HEK293 (cell line): ENCODE measurements at regions of chr9 and their contacts with region 1.

Region 1: DNA sequence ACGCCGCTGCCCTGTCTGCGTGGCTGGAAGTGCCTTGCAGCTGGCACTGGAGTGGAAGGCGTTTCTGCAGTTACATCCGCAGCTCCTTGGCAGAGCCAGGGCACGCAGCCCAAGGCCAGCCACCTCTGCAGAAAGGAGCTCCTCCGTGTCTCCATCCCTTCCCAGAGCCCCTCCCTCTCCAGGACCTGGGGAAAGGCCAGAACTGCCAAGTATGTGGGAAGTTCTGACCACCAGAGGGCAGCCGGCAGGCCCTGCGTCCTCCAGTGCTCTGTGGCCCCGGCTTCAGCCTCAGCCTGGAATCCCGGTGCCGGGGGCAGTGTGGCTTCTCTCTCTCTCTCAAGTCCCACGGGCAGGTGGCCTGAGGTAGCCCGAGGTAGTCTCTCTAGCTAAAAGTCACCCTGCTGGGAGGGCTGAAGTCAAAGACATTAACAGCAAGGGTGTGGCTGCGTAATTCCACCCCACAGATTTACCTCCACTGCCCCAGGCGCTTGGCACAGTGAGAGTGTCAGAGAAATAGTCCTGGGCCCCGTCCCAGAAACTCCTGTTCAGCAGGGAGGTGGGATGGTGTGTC is 101.7 kb upstream of the FCN2 start:
- H3K4me3 ChIP-seq: no peak overlapping the region
- H3K27ac ChIP-seq: no peak overlapping the region
- H3K4me1 ChIP-seq: peaks cover 3% of the 10 kb centered on the region; the same call in 1 of the 2 replicates
- CTCF ChIP-seq: peak; percentile 75

Region 2: DNA sequence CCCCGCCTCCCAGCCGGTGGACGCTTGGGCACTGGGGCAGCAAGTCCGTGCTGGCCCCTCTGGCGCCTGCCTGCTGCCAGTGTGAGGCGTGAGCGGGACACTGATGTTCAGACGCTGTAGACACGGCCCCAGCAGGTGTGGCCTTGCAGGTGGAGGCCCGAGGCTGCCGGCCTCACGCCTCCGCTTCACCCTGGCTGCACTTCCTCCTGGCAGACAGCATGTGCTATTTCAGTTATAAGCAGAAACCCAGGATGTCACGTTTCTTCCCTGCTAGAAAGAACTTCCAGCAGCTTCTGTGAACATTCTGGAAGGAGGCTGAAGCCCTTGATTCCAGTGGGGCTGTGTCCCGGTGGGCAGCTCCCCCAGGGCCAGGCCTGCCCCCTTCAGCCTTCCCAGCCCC is 13.1 kb before region 1 on chr9:
- CTCF ChIA-PET with region 1: interaction called, 10 read pairs
- POLR2A ChIA-PET with region 1: no interaction called
- H3K4me3 ChIP-seq: no peak overlapping the region
- H3K27ac ChIP-seq: no peak overlapping the region
- H3K4me1 ChIP-seq: no peaks in the 10 kb centered on the region
- CTCF ChIP-seq: no peak

Region 3: DNA sequence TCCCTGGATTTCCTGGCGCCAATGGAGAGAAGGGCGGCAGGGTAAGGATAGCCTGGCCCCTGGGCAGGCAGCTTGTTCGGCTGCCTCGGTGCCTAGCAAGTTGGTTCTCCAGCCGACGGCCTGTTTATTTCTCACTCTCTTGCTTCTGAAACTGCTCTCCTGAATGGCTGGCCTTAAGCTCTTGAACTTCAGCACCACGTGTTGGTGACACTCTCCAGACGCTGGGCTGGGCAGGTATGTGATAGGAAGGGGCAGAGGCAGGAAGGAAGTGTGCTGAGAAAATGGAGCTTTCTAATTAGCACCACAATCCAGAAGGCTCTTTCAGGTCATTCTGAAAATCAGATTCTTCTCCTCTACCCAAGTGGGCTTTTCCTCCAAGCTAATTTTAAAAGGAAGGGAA is 10.2 kb after region 1 on chr9:
- CTCF ChIA-PET with region 1: interaction called, 14 read pairs
- POLR2A ChIA-PET with region 1: no interaction called
- H3K4me3 ChIP-seq: no peak overlapping the region
- H3K27ac ChIP-seq: no peak overlapping the region
- H3K4me1 ChIP-seq: no peaks in the 10 kb centered on the region
- CTCF ChIP-seq: no peak

Region 4: GRCh38 chr9:134830126-134830525 is 51.2 kb after region 1 on chr9:
- CTCF ChIA-PET with region 1: no interaction called
- POLR2A ChIA-PET with region 1: no interaction called
- H3K4me3 ChIP-seq: no peak overlapping the region
- H3K27ac ChIP-seq: no peak overlapping the region
- H3K4me1 ChIP-seq: no peaks in the 10 kb centered on the region
- CTCF ChIP-seq: no peak

Region 5: DNA sequence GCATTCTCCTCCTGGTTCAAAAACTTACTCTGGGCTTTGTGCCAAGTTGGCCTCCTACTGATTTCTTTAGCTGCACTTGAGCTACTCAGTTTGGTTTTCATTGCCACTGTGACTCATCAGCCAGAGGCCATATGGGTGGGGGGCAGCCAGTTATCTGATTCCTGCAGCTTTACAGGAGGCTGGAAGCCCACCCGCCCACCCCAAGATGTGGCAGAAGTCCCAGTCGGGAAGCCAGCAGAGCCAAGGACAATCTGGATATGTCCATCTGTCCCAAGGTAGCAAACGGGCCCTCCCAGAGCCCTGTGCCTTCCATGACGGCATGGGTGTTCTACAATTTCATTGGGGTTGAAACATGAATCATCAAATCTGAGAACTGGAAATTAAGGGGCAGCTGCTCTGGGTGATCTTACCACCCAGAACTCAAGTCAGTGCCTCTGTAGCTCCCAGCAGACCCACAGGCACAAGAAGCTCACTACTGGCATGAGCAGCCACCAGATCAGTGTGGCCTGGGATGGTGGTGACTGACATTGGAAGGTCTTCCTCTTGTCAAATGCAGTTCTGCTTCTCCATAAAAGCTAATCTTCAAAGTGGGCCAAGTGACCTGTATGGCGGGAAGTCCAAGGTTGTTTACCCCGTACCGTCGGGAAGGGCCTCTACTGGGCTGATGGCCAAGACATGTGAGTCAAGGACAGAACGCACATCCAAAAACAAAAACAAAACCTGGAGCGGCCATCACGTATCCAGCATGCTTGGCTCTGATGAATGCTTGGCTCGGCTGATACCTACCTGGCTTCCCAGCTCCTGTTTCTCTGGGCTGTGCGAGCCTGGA is 117.3 kb after region 1 on chr9:
- CTCF ChIA-PET with region 1: interaction called, 18 read pairs
- POLR2A ChIA-PET with region 1: no interaction called
- H3K4me3 ChIP-seq: no peak overlapping the region
- H3K27ac ChIP-seq: peak overlapping the region; percentile 94
- H3K4me1 ChIP-seq: peaks cover 16% of the 10 kb centered on the region
- CTCF ChIP-seq: no peak

Region 6: DNA sequence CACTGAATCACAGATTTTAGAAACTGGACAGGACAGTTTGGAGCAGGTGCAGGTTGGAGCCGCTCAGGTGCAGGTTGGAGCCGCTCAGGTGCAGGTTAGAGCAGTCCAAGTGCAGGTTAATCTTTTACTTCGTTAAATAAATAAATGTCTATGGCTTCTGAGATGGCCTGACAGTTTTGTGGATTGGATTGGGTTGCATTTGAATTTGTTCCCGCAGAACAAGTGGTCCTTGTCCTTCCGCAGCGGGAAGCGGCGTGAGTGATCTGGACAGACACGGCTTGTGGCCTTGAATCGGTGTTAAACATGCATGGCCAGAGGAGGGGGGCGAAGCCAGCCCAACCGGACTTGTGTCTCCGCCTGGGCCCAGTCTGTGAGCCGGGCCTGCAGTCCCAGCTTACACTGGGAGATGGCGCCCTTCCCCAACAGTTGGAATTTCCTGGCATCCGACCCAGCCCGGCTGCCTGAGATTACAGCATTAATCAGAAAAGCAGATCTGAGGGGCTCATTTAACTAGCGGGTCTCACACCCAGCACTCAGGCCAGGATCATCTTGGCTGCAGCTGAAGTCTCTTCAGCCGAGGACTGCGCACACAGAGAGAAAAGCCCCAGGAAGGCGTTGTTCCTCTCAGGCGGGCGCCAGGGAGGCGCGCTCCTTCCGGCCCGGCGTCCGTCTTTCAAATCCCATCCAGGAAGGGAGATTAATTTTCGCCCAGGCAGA is 307.1 kb after region 1 on chr9:
- CTCF ChIA-PET with region 1: interaction called, 10 read pairs
- POLR2A ChIA-PET with region 1: no interaction called
- H3K4me3 ChIP-seq: no peak overlapping the region
- H3K27ac ChIP-seq: no peak overlapping the region
- H3K4me1 ChIP-seq: no peaks in the 10 kb centered on the region
- CTCF ChIP-seq: peak; percentile 89